ENCODE measurements at regions of chr18 and their contacts with region 1.

Region 1: DNA sequence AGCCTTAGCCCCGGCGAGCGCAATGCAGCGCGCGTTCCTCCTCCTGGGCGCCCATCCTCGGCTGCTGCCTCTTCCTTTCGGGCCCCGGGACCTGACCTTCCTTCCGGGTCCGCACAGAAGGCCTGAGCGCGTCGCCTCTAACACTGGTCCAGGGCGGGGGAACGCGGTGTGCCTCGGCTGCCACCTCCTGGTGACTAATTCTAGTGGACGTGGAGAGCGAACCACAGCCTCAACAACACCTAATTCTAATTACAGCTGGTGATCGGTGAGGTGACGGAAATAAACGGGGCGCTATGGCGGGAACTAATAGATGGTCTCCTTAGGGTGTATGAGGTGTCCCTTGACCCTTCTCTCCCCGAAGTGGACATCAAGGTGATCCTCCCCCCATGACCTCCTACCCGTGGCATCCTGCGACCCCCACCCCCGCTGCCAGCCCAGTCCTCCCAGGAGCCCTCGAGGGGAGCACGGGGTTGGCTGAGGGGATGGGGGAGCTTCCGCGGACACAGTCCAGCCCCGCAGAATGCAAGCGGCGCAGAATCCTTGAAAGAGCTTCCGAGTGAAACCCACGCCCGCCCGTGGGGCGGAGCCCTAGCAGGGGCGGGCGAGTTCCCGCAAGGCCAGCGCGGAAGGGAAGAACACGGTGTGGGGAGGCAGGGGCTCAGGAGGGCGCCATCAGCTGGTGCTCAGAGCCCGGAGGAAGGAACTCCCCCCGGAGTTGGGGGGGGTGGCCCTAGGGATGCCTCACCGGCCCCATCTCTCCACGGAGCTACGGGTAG is 12.8 kb upstream of the HMSD start:
- DNase-seq: peak; percentile 55
- H3K4me3 Mint-ChIP-seq: peak overlapping the region; percentile 81
- H3K27ac Mint-ChIP-seq: peak overlapping the region; percentile 44
- H3K4me1 Mint-ChIP-seq: peaks cover 4% of the 10 kb centered on the region
- H3K27me3 Mint-ChIP-seq: peaks cover 25% of the 10 kb centered on the region

Region 2: DNA sequence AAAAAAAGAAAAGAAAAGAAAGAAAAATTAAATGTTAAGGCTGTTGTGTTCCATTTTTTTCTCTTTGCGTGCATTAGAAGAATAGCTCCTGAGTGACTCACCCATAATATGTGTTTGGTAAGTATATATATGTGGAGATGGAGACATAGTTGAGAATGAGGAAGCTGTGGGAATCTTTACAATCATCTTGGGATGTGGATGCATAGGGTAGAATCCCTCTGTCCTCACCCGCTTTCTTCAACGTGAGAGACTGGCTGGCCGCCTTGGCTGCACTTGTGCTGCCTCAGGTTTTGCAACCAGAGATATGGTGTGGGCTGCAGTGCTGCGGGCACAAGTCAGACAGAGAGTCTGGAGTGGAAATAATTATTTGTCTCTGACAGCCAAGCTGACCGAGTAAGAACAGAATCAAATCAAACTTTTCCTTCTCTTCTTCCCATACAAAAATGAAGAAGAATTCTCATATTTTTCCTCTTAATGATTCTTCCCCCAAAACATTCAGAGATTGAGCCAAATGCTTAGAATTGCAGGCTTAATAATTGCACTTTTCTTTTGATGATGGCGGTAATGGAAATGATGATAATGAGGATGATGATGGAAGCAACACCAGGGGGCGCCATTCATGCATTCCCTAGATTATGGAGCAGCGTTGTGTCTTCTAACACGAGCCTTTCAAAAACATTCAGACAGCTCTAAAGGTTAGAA is 112.7 kb before region 1 on chr18:
- intact Hi-C with region 1: loop called (anchors 1 kb)
- DNase-seq: peak; percentile 9
- H3K4me3 Mint-ChIP-seq: no peak overlapping the region
- H3K27ac Mint-ChIP-seq: no peak overlapping the region
- H3K4me1 Mint-ChIP-seq: no peaks in the 10 kb centered on the region
- H3K27me3 Mint-ChIP-seq: peaks cover 17% of the 10 kb centered on the region

Region 3: DNA sequence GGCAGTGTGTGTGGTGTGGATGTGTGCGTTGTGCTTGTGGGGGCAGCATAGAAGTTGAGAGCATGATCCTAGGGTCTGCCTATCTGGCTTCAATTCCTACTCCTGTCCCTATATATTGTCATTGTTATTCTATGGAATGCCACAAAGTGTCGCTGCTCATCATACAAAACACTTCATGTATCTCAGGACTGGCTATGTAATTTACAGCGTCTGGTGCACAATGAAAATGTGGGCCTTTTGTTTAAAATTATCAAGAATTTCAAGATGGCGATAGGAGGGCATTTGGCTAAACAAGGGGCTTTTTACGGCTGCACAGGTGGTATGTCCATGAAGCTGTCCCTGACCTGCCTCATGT is 45.4 kb before region 1 on chr18:
- intact Hi-C with region 1: loop called (anchors 1 kb)
- DNase-seq: no peak
- H3K4me3 Mint-ChIP-seq: no peak overlapping the region
- H3K27ac Mint-ChIP-seq: no peak overlapping the region
- H3K4me1 Mint-ChIP-seq: no peaks in the 10 kb centered on the region
- H3K27me3 Mint-ChIP-seq: no peaks in the 10 kb centered on the region

Region 4: DNA sequence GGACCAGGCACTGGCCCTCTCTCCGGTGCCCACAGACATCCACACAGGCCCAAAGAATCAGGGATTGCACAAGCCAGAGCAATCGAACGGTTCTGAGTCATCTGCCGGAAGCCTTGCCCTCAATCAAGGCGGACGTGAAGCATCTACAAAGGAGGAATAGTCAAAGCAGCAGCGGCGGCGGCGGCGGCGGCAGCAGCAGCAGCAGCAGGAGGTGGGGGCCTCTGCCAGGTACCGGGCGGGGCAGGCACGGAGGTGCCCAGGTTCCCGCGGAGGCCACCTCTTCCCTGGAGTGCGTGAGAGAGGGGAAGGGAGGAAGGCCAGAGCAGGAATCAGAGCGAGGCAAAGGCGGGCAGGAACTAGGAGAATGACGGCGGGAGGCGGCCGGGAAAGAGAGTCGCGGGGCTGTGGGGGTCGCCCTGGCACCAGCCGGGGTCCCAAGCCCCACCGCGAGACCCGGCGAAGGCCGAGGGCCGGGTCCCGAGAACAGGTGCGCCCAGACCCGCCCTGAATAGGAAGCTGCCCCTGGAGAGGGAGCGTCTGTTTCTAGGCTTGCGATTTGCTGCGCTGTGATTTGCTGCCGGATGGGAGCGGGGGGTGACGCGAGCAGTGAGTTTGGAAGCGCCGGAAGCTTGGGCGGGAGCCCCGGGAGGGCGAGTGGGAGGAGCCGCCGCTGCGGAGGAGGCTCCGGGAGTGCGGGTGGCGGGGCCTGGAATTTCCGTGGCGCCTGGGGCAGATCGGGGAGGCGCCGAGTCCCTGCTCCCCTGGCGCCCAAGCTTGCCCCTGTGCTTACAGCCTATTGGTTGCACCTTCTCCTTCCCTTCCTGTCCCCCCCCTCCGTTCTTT is 33.8 kb after region 1 on chr18 and contains the start of gene SERPINB8:
- intact Hi-C with region 1: loop called (anchors 5 kb)
- DNase-seq: peak; percentile 74
- H3K4me3 Mint-ChIP-seq: peak within 1 kb of the TSS; percentile 97
- H3K27ac Mint-ChIP-seq: peak within 1 kb of the TSS; percentile 98
- H3K4me1 Mint-ChIP-seq: peaks cover 54% of the 10 kb centered on the region
- H3K27me3 Mint-ChIP-seq: no peaks in the 10 kb centered on the region
- total RNA-seq, gene SERPINB8: 22.8 and 25.7 TPM in 2 replicates